ENCODE measurements at regions of chr20 and their contacts with region 1.

Region 1: GRCh38 chr20:32336918-32337347 is 21.2 kb upstream of the ASXL1 start:
- DNase-seq: peak; percentile 44 to 57
- ATAC-seq: peak; percentile 83 to 84; a peak in 5 of 6 replicates
- H3K4me3 ChIP-seq: no peak overlapping the region
- H3K27ac ChIP-seq: no peak overlapping the region
- H3K4me1 ChIP-seq: peaks cover 12% of the 10 kb centered on the region
- CTCF ChIP-seq: peak; percentile 56
- EP300 ChIP-seq: no peak
- POLR2A ChIP-seq: no peak
- RAD21 ChIP-seq: peak; percentile 58 to 65

Region 2: GRCh38 chr20:32325706-32326503 is 11.0 kb before region 1 on chr20:
- CTCF ChIA-PET with region 1: interaction called, 25 read pairs
- POLR2A ChIA-PET with region 1: no interaction called
- DNase-seq: peak; percentile 43 to 91
- ATAC-seq: peak; percentile 94 to 98
- H3K4me3 ChIP-seq: no peak overlapping the region
- H3K27ac ChIP-seq: peak overlapping the region; percentile 63 to 79
- H3K4me1 ChIP-seq: peaks cover 22% of the 10 kb centered on the region
- CTCF ChIP-seq: no peak
- EP300 ChIP-seq: no peak
- POLR2A ChIP-seq: no peak
- RAD21 ChIP-seq: no peak

Region 3: GRCh38 chr20:32357375-32357868 is 20.5 kb after region 1 on chr20:
- CTCF ChIA-PET with region 1: interaction called, 10 read pairs
- POLR2A ChIA-PET with region 1: no interaction called
- DNase-seq: no peak
- ATAC-seq: peak; percentile 34 to 36
- H3K4me3 ChIP-seq: peak overlapping the region; percentile 73
- H3K27ac ChIP-seq: peak overlapping the region; percentile 98 to 100
- H3K4me1 ChIP-seq: peaks cover 52% of the 10 kb centered on the region
- CTCF ChIP-seq: no peak
- EP300 ChIP-seq: no peak
- POLR2A ChIP-seq: no peak
- RAD21 ChIP-seq: no peak

Region 4: GRCh38 chr20:32362901-32363364 is 26.0 kb after region 1 on chr20:
- CTCF ChIA-PET with region 1: interaction called, 10 read pairs
- POLR2A ChIA-PET with region 1: no interaction called
- DNase-seq: no peak
- ATAC-seq: no peak
- H3K4me3 ChIP-seq: no peak overlapping the region
- H3K27ac ChIP-seq: no peak overlapping the region
- H3K4me1 ChIP-seq: peaks cover 57% of the 10 kb centered on the region
- CTCF ChIP-seq: no peak
- EP300 ChIP-seq: no peak
- POLR2A ChIP-seq: no peak
- RAD21 ChIP-seq: no peak

Measured in A549 (cell line).